ENCODE measurements at regions of chr16 and their contacts with region 1.

Region 1: DNA sequence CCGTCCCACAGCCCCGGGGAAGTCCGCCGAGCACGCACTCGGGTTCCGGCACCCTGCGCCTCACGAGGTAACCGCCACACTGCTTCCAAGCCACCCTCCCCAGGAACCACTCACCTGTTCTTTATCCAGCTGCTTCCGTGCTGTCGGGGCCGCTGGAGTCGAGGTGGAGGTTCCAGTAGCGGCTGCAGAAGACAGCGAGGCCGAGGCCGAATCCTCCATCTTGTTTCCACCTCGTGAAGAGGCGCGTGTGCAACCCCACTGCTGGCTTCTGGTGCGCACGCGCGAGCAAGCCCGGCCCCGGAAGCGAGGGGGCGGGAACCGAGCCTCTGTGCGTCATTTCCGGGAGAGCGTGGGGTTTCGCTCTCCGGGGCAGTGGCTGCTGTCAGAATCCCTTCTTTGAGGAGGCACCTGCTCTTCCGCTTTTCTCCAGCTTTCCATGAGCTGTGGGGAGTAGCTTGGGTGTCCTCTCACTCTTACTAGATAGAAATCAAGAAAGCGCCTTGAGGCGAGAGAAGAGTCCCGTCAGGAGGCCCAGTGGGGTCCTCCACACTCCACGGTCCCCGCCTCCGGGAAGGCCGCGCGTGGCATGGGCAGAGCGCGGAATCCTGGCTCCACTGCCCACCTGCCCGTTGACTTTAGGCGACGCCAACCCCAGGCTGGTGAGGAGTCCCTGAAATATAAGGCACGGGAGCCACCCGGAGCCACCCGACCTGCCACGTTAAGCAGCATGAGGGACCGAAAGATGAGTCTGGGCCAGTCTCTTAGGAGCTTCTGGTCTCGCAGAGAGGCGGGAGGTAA is at the start of gene RSL1D1:
- DNase-seq: peak; percentile 90 to 99 (median 96)
- ATAC-seq: peak; percentile 92
- H3K4me3 ChIP-seq: peak within 1 kb of the TSS; percentile 95
- H3K4me3 Mint-ChIP-seq: peak within 1 kb of the TSS; percentile 94 to 99 (median 99)
- H3K27ac ChIP-seq: peak within 1 kb of the TSS; percentile 89
- H3K27ac Mint-ChIP-seq: peak within 1 kb of the TSS; percentile 91 to 98 (median 97)
- H3K4me1 ChIP-seq: peaks cover 29% of the 10 kb centered on the region in 2 donors
- H3K4me1 Mint-ChIP-seq: peaks cover 32 to 72% (median 63%) of the 10 kb centered on the region in 7 donors
- H3K27me3 ChIP-seq: no peaks in the 10 kb centered on the region
- H3K27me3 Mint-ChIP-seq: no peaks in the 10 kb centered on the region
- total RNA-seq, gene RSL1D1: 141 to 255 (median 219) TPM

Region 2: GRCh38 chr16:11345040-11345862 is 506.2 kb before region 1 on chr16 and contains the start of gene RMI2:
- CTCF ChIA-PET with region 1: no interaction called
- POLR2A ChIA-PET with region 1: no interaction called
- intact Hi-C with region 1: no loop called
- DNase-seq: peak; percentile 90 to 98 (median 95)
- ATAC-seq: peak; percentile 99
- H3K4me3 ChIP-seq: peak within 1 kb of the TSS; percentile 44
- H3K4me3 Mint-ChIP-seq: peak within 1 kb of the TSS; percentile 79 to 98 (median 92)
- H3K27ac ChIP-seq: peak within 1 kb of the TSS; percentile 65
- H3K27ac Mint-ChIP-seq: peak within 1 kb of the TSS; percentile 58 to 99 (median 83)
- H3K4me1 ChIP-seq: no peaks in the 10 kb centered on the region
- H3K4me1 Mint-ChIP-seq: peaks cover 10 to 49% (median 24%) of the 10 kb centered on the region in 7 donors
- H3K27me3 ChIP-seq: no peaks in the 10 kb centered on the region
- H3K27me3 Mint-ChIP-seq: no peaks in the 10 kb centered on the region
- total RNA-seq, gene RMI2: 1.8 to 57.0 (median 3.3) TPM

Region 3: GRCh38 chr16:11557801-11558200 is 293.7 kb before region 1 on chr16:
- CTCF ChIA-PET with region 1: no interaction called
- POLR2A ChIA-PET with region 1: no interaction called
- intact Hi-C with region 1: no loop called
- DNase-seq: no peak
- ATAC-seq: no peak
- H3K4me3 ChIP-seq: no peak overlapping the region
- H3K4me3 Mint-ChIP-seq: peak overlapping the region in 9 of 10 donors; percentile 6 to 91 (median 61)
- H3K27ac ChIP-seq: peak overlapping the region; percentile 89
- H3K27ac Mint-ChIP-seq: peak overlapping the region; percentile 92 to 99 (median 97)
- H3K4me1 ChIP-seq: peaks cover 60 to 71% of the 10 kb centered on the region in 2 donors
- H3K4me1 Mint-ChIP-seq: peaks cover 31 to 90% (median 73%) of the 10 kb centered on the region in 7 donors
- H3K27me3 ChIP-seq: no peaks in the 10 kb centered on the region
- H3K27me3 Mint-ChIP-seq: peaks cover 0 to 2% (median 0%) of the 10 kb centered on the region in 5 donors

Region 4: GRCh38 chr16:11682655-11683096 is 168.8 kb before region 1 on chr16:
- CTCF ChIA-PET with region 1: no interaction called
- POLR2A ChIA-PET with region 1: no interaction called
- intact Hi-C with region 1: no loop called
- DNase-seq: no peak
- ATAC-seq: peak; percentile 36
- H3K4me3 ChIP-seq: no peak overlapping the region
- H3K4me3 Mint-ChIP-seq: peak overlapping the region in 3 of 10 donors; percentile 14 to 73 (median 16)
- H3K27ac ChIP-seq: peak overlapping the region; percentile 45
- H3K27ac Mint-ChIP-seq: peak overlapping the region; percentile 32 to 95 (median 84)
- H3K4me1 ChIP-seq: peaks cover 11 to 26% of the 10 kb centered on the region in 2 donors
- H3K4me1 Mint-ChIP-seq: peaks cover 31 to 60% (median 51%) of the 10 kb centered on the region in 7 donors
- H3K27me3 ChIP-seq: no peaks in the 10 kb centered on the region
- H3K27me3 Mint-ChIP-seq: no peaks in the 10 kb centered on the region

Region 5: GRCh38 chr16:11783319-11784037 is 68.0 kb before region 1 on chr16:
- CTCF ChIA-PET with region 1: no interaction called
- POLR2A ChIA-PET with region 1: no interaction called
- intact Hi-C with region 1: loop called (anchors 1 kb)
- DNase-seq: peak; percentile 31 to 89 (median 82)
- ATAC-seq: peak; percentile 90
- H3K4me3 ChIP-seq: peak overlapping the region; percentile 52
- H3K4me3 Mint-ChIP-seq: peak overlapping the region; percentile 79 to 92 (median 85)
- H3K27ac ChIP-seq: peak overlapping the region; percentile 96
- H3K27ac Mint-ChIP-seq: peak overlapping the region; percentile 95 to 99 (median 99)
- H3K4me1 ChIP-seq: peaks cover 33 to 49% of the 10 kb centered on the region in 2 donors
- H3K4me1 Mint-ChIP-seq: peaks cover 41 to 68% (median 62%) of the 10 kb centered on the region in 7 donors
- H3K27me3 ChIP-seq: no peaks in the 10 kb centered on the region
- H3K27me3 Mint-ChIP-seq: no peaks in the 10 kb centered on the region

Region 6: GRCh38 chr16:11903906-11904305 is 52.4 kb after region 1 on chr16:
- CTCF ChIA-PET with region 1: no interaction called
- POLR2A ChIA-PET with region 1: no interaction called
- intact Hi-C with region 1: no loop called
- DNase-seq: no peak
- ATAC-seq: no peak
- H3K4me3 ChIP-seq: no peak overlapping the region
- H3K4me3 Mint-ChIP-seq: no peak overlapping the region
- H3K27ac ChIP-seq: no peak overlapping the region
- H3K27ac Mint-ChIP-seq: peak overlapping the region in 3 of 9 donors; percentile 26 to 58 (median 41)
- H3K4me1 ChIP-seq: peaks cover 18 to 21% of the 10 kb centered on the region in 2 donors
- H3K4me1 Mint-ChIP-seq: peaks cover 39 to 79% (median 63%) of the 10 kb centered on the region in 7 donors
- H3K27me3 ChIP-seq: no peaks in the 10 kb centered on the region
- H3K27me3 Mint-ChIP-seq: no peaks in the 10 kb centered on the region

Region 7: GRCh38 chr16:11977376-11978041 is 126.0 kb after region 1 on chr16:
- CTCF ChIA-PET with region 1: no interaction called
- POLR2A ChIA-PET with region 1: interaction called, 3 read pairs
- intact Hi-C with region 1: loop called (anchors 1 kb)
- DNase-seq: no peak
- ATAC-seq: no peak
- H3K4me3 ChIP-seq: peak overlapping the region; percentile 71
- H3K4me3 Mint-ChIP-seq: peak overlapping the region; percentile 85 to 99 (median 94)
- H3K27ac ChIP-seq: peak overlapping the region; percentile 88
- H3K27ac Mint-ChIP-seq: peak overlapping the region; percentile 60 to 97 (median 93)
- H3K4me1 ChIP-seq: peaks cover 11 to 19% of the 10 kb centered on the region in 2 donors
- H3K4me1 Mint-ChIP-seq: peaks cover 33 to 55% (median 42%) of the 10 kb centered on the region in 7 donors
- H3K27me3 ChIP-seq: no peaks in the 10 kb centered on the region
- H3K27me3 Mint-ChIP-seq: no peaks in the 10 kb centered on the region